Gastrocnemius medialis (tissue), 4 donors: ENCODE measurements at regions of chr11 and their contacts with region 1.

Region 1: DNA sequence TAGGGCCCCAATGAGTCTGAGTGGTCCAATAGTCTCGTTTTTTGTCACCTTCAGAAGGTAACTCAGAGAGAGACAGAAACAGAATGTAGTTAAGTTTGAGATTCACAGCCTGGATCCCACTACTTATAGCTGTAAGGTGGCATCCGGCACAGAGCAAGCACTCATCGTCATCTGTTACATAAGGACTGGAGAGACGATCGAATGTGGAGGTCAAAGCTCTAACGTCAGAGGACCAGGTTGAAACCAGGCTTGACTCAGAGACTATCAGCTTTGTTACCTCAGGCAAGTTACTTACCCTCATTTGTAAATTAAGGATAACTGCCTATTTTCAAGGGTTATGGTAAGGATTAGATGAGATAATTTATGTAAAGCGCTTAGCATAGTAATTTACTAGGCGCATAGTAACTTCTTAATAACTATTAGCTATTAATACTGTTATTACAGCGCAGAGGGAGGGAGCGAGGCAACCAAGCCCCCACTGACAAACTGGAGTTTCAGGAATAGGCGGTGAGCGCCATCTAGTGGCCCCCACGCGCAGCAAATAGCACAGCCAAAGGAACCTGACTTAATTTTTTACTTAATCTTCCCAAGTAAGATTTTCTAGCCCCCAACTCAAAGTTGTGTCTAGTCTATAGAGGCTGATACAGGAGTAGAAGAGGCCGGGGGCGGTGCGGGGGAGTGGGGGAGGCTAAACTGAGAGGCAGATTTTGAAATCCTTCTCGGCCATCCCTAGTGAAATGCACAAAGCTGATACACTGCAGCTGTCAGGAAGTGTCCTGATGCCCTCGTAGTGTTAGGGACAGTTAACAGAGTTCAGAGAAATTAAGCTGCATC is 29.0 kb upstream of the API5 start:
- DNase-seq: no peak
- ATAC-seq: no peak
- H3K4me3 ChIP-seq: no peak overlapping the region
- H3K27ac ChIP-seq: no peak overlapping the region
- H3K4me1 ChIP-seq: no peaks in the 10 kb centered on the region
- H3K27me3 ChIP-seq: peaks cover 0 to 5% (median 3%) of the 10 kb centered on the region in 3 donors
- CTCF ChIP-seq: peak; percentile 41 to 87 (median 58)
- POLR2A ChIP-seq: no peak

Region 2: DNA sequence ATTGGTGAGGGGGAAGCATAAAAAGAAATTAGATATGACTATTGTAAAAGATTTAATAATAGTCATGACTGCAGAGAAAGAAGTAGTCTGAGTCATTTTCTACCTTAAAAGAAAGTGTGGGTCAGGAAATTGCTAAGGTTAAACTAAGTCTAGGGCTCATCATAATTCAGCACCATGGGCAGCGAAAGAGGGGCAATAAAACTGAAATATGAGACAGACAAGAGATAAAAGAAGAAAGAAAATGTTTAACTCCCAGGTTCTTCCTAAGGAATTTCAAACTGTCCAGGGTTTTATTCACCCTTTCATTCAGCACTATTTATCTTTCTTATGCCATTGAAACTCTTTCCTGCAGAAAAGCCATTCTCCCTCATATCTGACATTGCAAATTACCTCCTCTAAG is 85.4 kb before region 1 on chr11:
- in situ Hi-C with region 1: loop called in 1 of 4 experiments (anchors 25 kb)
- intact Hi-C with region 1: no loop called
- DNase-seq: no peak
- ATAC-seq: no peak
- H3K4me3 ChIP-seq: no peak overlapping the region
- H3K27ac ChIP-seq: no peak overlapping the region
- H3K4me1 ChIP-seq: no peaks in the 10 kb centered on the region
- H3K27me3 ChIP-seq: no peaks in the 10 kb centered on the region
- CTCF ChIP-seq: no peak
- POLR2A ChIP-seq: no peak